ENCODE measurements at regions of chr19 and their contacts with region 1.

Region 1: DNA sequence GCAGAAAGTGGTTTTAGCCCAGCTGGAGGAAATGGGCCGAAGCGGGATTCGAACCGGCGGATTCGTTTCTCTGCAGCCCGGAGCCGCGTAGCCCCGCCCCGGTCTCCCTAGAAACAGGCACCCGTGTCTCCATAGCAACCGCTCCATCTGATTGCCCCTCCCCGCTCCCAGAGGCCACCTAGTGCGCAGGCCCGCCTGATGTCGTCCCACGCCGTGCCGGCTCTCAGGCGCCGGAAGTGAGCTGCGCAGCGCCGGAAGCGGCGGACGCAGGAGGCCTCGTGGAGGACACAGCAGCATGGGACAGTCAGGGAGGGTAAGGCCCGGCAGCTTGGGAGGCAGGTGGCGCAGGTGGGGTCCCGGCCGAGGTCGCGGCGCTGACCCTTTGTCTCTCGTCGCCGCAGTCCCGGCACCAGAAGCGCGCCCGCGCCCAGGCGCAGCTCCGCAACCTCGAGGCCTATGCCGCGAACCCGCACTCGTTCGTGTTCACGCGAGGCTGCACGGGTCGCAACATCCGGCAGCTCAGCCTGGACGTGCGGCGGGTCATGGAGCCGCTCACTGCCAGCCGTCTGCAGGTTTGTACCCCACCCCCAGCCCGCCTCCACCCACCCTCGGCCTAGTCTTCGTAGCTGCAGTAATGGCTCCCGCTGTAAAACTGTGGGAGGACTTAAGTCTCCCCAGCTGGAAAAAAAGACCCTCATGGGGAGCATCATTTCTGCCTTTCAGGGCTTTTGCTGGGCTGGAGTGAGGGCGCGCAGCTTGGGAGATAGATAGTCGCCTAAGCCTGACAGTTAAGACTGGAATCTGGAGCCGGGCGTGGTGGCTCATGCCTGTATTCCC is at the start of gene PPAN:
- DNase-seq: peak; percentile 98 to 99
- H3K4me3 ChIP-seq: peak within 1 kb of the TSS; percentile 62 to 97
- H3K27ac ChIP-seq: peak within 1 kb of the TSS; percentile 69 to 79
- H3K4me1 ChIP-seq: peaks cover 0 to 18% (median 15%) of the 10 kb centered on the region in 4 donors
- H3K27me3 ChIP-seq: no peaks in the 10 kb centered on the region
- CTCF ChIP-seq: peak in 1 of 2 experiments; percentile 6

Region 2: DNA sequence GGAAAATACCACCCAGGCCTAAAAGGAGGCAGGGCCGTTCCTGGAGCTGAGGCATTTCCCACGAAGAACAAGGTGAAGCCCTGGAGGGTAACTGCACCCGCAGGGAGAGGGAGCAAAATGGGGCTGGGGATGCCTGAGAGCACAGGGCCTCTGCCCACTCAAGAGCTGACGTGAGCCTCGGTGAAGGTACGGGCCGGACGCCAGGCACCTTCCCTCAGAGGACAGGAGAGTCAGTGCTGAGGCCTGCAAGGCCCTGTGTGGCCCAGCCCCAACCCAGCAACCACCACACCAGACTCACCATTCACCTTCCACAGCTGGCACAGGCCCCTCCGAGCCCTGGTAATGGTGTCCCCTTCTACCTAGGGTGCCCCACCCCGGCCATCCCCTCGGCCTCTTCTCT is 52.2 kb after region 1 on chr19:
- intact Hi-C with region 1: no loop called
- DNase-seq: no peak
- H3K4me3 ChIP-seq: no peak overlapping the region
- H3K27ac ChIP-seq: no peak overlapping the region
- H3K4me1 ChIP-seq: no peaks in the 10 kb centered on the region
- H3K27me3 ChIP-seq: no peaks in the 10 kb centered on the region
- CTCF ChIP-seq: no peak

Region 3: DNA sequence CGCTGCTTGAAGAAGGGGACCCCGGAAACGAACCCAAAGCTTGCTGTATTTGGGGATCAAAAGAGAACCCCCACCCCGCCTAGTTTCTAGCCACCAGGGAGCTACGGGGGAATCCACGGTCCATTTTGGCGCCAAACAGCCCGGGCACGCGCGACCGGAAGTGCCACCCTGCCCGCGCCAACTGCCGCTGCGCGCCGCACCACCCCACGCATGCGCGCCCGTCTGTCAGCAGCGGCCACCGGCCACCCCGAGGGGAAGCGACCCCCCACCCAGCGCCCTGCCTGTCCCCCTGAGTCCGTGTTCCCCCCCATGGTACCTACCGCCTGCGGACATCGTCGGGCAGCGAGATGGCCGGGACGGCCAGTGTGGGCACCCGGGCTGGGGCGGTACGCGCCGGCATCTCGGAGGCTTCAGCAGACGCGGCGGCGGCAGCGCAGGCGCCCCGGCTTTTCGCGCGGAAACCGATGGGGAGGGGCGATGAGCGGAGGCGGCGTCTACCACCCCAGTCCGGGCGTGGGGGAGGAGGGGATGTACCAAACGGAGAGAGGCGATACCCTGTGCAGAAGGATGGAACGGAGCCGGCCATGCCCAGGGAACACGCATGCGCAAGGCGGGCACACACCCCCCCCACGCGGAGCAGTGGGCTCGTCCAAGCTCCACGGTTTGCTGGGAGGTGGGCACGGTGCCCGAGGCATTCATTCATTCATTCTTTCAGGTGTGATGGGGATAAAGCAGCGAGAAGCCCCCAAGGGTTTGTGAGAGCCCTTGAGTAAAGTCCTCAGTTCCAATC is 88.4 kb after region 1 on chr19 and contains the start of gene DNMT1:
- intact Hi-C with region 1: loop called (anchors 10 kb)
- DNase-seq: peak; percentile 94 to 96
- H3K4me3 ChIP-seq: peak within 1 kb of the TSS; percentile 82 to 84
- H3K27ac ChIP-seq: peak within 1 kb of the TSS; percentile 81 to 87
- H3K4me1 ChIP-seq: peaks cover 0 to 22% (median 13%) of the 10 kb centered on the region in 4 donors
- H3K27me3 ChIP-seq: no peaks in the 10 kb centered on the region
- CTCF ChIP-seq: no peak

Region 4: DNA sequence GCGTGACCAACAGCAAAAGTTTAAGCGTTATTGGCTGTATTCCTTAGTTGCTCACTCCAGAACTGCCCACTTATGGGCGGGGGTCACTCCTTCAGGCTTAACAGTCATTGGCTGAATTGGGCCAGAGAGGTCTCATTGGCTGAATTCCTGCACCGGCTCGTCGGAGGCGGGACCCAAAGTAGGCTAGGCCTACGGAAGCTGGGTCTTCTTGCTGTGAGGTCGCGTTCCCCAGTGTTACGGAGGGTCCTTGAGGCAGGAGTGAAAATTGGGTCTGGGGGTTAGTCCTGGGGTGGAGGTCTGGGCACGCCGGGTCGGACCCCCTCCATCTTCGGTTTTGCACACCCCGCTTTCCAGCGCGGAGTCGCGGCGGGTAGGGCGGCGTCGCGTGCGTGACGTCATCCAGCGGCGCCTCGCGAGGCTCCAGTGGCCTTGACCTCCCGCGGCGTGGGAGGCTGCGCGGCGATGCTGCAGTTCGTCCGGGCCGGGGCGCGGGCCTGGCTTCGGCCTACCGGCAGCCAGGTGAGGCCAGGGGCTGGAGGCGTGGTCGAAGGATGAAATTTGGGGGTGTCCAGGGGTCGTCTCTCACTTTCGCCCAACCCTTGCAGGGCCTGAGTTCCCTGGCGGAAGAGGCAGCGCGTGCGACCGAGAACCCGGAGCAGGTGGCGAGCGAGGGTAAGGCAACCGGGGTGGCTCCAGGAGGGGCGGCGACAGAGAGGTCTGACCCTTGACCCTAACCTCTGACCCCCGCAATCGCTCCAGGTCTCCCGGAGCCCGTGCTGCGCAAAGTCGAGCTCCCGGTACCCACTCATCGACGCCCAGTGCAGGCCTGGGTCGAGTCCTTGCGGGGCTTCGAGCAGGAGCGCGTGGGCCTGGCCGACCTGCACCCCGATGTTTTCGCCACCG is 145.7 kb after region 1 on chr19 and contains the start of gene MRPL4:
- intact Hi-C with region 1: loop called (anchors 5 kb)
- DNase-seq: peak; percentile 97 to 98
- H3K4me3 ChIP-seq: peak within 1 kb of the TSS; percentile 83 to 91
- H3K27ac ChIP-seq: peak within 1 kb of the TSS; percentile 74 to 79
- H3K4me1 ChIP-seq: peaks cover 0 to 25% (median 13%) of the 10 kb centered on the region in 4 donors
- H3K27me3 ChIP-seq: no peaks in the 10 kb centered on the region
- CTCF ChIP-seq: no peak

Measured in tibial artery (tissue), 4 donors.